SK-N-SH (cell line): ENCODE measurements at regions of chr2 and their contacts with region 1.

Region 1: GRCh38 chr2:166180951-166181812 is 53.4 kb upstream of the SCN1A start:
- DNase-seq: peak; percentile 51
- H3K4me3 ChIP-seq: no peak overlapping the region
- H3K27ac ChIP-seq: no peak overlapping the region
- H3K4me1 ChIP-seq: no peaks in the 10 kb centered on the region; a peak in 1 of 4 replicates
- H3K27me3 ChIP-seq: no peaks in the 10 kb centered on the region
- CTCF ChIP-seq: peak; percentile 64
- EP300 ChIP-seq: no peak
- RAD21 ChIP-seq: peak; percentile 64

Region 2: DNA sequence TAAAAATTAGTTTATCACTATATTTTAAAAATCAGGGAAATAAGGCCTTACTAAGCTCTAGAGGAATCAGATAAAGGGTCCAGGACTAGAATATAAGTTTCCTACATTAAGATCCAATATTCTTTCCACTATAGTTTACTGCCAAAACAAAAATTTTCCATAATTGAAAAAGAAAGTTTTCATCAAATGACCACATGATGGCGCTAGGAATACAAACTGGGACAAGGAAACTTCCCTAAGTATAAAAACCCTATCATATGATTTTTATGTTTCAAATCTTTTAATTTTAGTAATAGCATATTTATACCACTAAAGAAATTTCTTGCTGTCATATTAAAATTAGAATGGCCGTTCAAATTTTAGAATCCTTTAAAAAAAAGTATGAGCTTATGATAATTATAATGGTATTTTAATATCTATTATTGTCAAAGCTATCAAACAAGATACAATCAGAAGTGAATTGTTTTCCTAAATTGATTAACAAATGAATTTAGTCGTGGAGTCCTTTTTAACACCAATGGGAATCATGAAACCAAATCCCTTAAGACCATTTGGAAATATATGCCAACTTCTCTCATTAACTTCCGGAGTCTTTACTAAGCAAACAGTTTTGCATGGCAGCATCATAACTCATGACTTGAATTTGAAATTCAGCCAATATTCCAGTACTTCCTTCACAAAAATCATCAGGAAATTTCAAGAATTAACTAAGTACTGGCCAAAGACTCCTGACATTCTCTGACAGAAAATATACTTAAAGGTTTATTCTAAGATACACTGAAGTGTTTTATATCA is 123.6 kb before region 1 on chr2:
- CTCF ChIA-PET with region 1: interaction called, 13 read pairs
- POLR2A ChIA-PET with region 1: no interaction called
- DNase-seq: no peak
- H3K4me3 ChIP-seq: no peak overlapping the region; a peak in 1 of 4 replicates
- H3K27ac ChIP-seq: peak overlapping the region in 1 of 2 experiments; percentile 30; a peak in 2 of 4 replicates
- H3K4me1 ChIP-seq: peaks cover 0 to 6% of the 10 kb centered on the region in 2 experiments; a peak in 2 of 4 replicates
- H3K27me3 ChIP-seq: no peaks in the 10 kb centered on the region
- CTCF ChIP-seq: peak; percentile 81
- EP300 ChIP-seq: no peak
- RAD21 ChIP-seq: peak; percentile 69

Region 3: DNA sequence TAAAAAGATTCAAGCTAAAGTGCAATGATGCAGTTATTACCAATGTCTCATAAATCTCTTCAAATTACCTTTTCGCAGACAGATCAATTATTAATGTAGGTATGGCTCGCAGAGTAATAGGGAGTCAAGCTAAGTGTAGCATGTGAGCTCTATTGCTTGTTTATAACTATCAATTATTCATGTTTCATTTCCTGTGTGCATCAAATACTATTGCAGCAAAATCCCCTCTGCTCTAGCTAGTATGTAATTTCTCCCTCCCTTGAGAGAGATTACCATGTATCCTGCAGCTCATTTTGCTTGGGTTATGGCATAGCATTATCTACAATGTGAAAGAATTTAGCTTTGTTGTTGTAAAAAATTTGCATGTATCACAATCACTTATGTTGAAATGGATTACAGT is 12.2 kb after region 1 on chr2:
- CTCF ChIA-PET with region 1: interaction called, 19 read pairs
- POLR2A ChIA-PET with region 1: no interaction called
- DNase-seq: no peak
- H3K4me3 ChIP-seq: no peak overlapping the region
- H3K27ac ChIP-seq: no peak overlapping the region
- H3K4me1 ChIP-seq: no peaks in the 10 kb centered on the region
- H3K27me3 ChIP-seq: no peaks in the 10 kb centered on the region
- CTCF ChIP-seq: no peak
- EP300 ChIP-seq: no peak
- RAD21 ChIP-seq: no peak

Region 4: GRCh38 chr2:166417669-166418068 is 236.5 kb after region 1 on chr2:
- CTCF ChIA-PET with region 1: interaction called, 23 read pairs
- POLR2A ChIA-PET with region 1: no interaction called
- DNase-seq: no peak
- H3K4me3 ChIP-seq: no peak overlapping the region
- H3K27ac ChIP-seq: no peak overlapping the region
- H3K4me1 ChIP-seq: peaks cover 3 to 9% of the 10 kb centered on the region in 2 experiments; a peak in 2 of 4 replicates
- H3K27me3 ChIP-seq: no peaks in the 10 kb centered on the region
- CTCF ChIP-seq: 0 out of 2 replicates have a peak, but pooled peaks have one; percentile 19
- EP300 ChIP-seq: no peak
- RAD21 ChIP-seq: peak; percentile 53

Region 5: DNA sequence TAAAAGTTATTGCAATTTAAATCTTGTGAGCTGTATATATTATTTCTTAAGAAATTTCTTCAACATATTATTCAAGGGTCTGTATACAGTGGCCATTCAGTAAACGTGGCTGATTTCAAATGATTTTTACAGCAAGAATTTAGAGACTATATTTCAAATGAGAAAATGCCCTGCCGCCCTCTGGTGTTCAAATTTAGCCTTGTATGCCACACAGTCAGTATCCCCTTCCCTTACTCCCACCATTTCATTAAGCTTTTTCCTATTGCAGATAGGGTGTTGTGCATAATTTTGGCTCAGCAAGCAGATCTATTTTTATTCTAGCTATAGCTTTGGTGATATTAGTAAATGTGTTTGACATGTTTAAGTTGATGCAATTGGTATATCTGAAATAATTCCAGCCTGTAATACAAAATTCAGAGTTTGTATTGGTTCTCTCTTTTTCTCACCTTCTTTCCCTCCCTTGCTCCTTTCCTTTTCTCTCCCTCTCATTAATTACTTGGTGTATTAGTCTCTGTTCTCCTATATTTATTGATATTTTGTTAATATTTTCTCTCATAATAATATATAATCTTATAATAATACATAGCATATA is 335.6 kb after region 1 on chr2:
- CTCF ChIA-PET with region 1: interaction called, 16 read pairs
- POLR2A ChIA-PET with region 1: no interaction called
- DNase-seq: peak; percentile 26
- H3K4me3 ChIP-seq: peak overlapping the region in 1 of 2 experiments; percentile 14; a peak in 1 of 4 replicates
- H3K27ac ChIP-seq: no peak overlapping the region
- H3K4me1 ChIP-seq: no peaks in the 10 kb centered on the region
- H3K27me3 ChIP-seq: no peaks in the 10 kb centered on the region
- CTCF ChIP-seq: peak; percentile 79
- EP300 ChIP-seq: no peak
- RAD21 ChIP-seq: peak; percentile 79